ENCODE measurements at regions of chr5 and their contacts with region 1.

Region 1: DNA sequence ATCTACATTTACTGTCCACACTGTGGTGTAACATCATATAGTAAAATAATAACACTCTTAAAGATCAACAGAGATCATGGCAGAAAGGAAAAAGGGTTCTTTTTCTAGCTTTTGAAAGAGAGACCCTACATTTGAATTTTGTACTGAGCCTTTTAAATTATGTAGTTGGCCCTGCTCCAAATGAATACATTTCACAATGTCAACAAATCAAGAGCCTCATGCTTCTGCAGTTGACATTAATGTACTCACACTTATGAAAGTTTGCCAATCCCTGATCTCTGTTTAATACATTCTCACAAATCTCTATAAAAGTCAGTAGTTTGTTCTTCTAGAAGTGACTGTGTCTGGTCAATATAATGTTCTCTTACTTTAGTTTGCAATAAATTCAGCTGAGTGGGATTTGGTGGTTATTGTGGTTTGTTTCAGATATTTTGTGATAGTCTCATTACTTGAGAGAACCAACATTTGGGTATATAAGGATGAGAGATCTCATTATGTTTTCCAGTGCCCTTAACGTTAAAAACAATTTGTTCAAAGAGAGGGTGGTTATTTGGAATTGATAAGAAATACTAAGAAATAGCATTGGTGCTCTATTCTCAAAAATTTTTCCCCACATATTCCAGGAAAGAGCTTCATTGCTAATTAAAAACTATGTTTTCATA is 277.8 kb upstream of the FTMT start:
- DNase-seq: no peak
- H3K4me3 ChIP-seq: no peak overlapping the region
- H3K27ac ChIP-seq: no peak overlapping the region
- H3K4me1 ChIP-seq: no peaks in the 10 kb centered on the region
- H3K27me3 ChIP-seq: no peaks in the 10 kb centered on the region
- CTCF ChIP-seq: no peak

Region 2: GRCh38 chr5:120644516-120644915 is 929.3 kb before region 1 on chr5:
- CTCF ChIA-PET with region 1: no interaction called
- POLR2A ChIA-PET with region 1: no interaction called
- intact Hi-C with region 1: loop called (anchors 5 kb)
- DNase-seq: no peak
- H3K4me3 ChIP-seq: no peak overlapping the region
- H3K27ac ChIP-seq: no peak overlapping the region
- H3K4me1 ChIP-seq: no peaks in the 10 kb centered on the region
- H3K27me3 ChIP-seq: no peaks in the 10 kb centered on the region
- CTCF ChIP-seq: no peak

Region 3: DNA sequence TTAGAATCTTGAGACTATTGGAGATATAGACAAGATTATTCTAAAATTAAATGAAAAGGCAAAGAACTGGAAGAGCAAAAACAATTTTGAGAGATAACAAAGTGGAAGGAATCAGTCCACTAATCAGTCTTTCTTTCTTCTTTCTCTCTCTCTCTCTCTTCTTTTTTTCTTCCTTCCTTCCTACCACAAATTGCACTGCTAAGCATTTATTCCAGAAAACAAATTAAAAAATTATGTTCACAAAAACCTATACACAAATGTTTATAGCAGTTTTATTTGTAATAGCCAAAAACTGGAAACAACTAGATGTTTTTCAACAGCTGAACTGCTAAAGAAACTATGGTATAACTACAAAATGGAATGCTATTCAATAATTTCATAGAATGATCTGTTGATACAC is 14.0 kb before region 1 on chr5:
- CTCF ChIA-PET with region 1: no interaction called
- POLR2A ChIA-PET with region 1: no interaction called
- intact Hi-C with region 1: no loop called
- DNase-seq: no peak
- H3K4me3 ChIP-seq: no peak overlapping the region
- H3K27ac ChIP-seq: no peak overlapping the region
- H3K4me1 ChIP-seq: no peaks in the 10 kb centered on the region
- H3K27me3 ChIP-seq: no peaks in the 10 kb centered on the region
- CTCF ChIP-seq: no peak

Measured in PC-9 (cell line).